Activated B cell treated with CpG ODN at 0.5 μM for 24 hours (primary cell): ENCODE measurements at regions of chr14 and their contacts with region 1.

Region 1: GRCh38 chr14:23301288-23301968 is 1.2 kb downstream of the PPP1R3E start:
- DNase-seq: peak; percentile 99
- ATAC-seq: peak; percentile 78
- H3K4me3 Mint-ChIP-seq: peak overlapping the region; percentile 99
- H3K27ac Mint-ChIP-seq: peak overlapping the region; percentile 90
- H3K4me1 Mint-ChIP-seq: peaks cover 37% of the 10 kb centered on the region
- H3K27me3 Mint-ChIP-seq: no peaks in the 10 kb centered on the region
- CTCF ChIP-seq: no peak

Region 2: GRCh38 chr14:21308479-21309237 is 1992.8 kb before region 1 on chr14:
- CTCF ChIA-PET with region 1: no interaction called
- POLR2A ChIA-PET with region 1: no interaction called
- intact Hi-C with region 1: loop called (anchors 5 kb)
- DNase-seq: peak; percentile 51
- ATAC-seq: peak; percentile 85
- H3K4me3 Mint-ChIP-seq: peak overlapping the region; percentile 87
- H3K27ac Mint-ChIP-seq: peak overlapping the region; percentile 93
- H3K4me1 Mint-ChIP-seq: peaks cover 26% of the 10 kb centered on the region
- H3K27me3 Mint-ChIP-seq: no peaks in the 10 kb centered on the region
- CTCF ChIP-seq: no peak

Region 3: DNA sequence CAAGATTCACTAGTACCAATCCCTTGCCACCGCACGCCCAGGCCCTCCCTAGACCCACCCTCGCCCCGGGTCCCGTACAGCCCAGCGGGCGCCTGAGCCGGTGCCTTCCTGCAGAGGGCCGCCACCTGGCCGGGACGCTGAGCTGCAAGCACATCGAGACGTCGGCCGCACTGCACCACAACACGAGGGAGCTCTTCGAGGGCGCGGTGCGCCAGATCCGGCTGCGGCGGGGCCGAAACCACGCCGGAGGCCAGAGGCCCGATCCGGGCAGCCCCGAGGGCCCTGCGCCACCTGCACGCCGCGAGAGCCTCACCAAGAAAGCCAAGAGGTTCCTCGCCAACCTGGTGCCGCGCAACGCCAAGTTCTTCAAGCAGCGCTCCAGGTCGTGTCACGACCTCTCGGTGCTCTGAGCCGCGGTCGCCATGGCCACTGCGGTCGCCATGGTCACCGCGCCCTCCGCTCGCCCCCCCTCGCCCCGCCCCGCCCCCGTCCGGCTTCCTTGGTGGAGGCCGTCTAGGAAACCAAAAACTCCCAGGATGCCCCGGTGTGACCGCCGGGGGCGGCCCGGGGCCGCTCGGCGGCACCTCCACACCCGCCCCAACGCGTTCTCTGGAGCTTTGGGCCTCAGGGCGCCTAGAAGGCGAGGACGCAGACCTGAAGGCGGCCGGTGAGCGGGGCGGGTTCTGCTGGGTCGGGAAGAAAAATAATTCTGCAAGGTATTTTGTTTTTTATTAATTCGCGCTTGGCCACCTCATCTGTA is 414.7 kb before region 1 on chr14:
- CTCF ChIA-PET with region 1: no interaction called
- POLR2A ChIA-PET with region 1: no interaction called
- intact Hi-C with region 1: loop called (anchors 5 kb)
- DNase-seq: peak; percentile 71
- ATAC-seq: peak; percentile 55
- H3K4me3 Mint-ChIP-seq: peak overlapping the region; percentile 90
- H3K27ac Mint-ChIP-seq: peak overlapping the region; percentile 97
- H3K4me1 Mint-ChIP-seq: peaks cover 80% of the 10 kb centered on the region
- H3K27me3 Mint-ChIP-seq: no peaks in the 10 kb centered on the region
- CTCF ChIP-seq: no peak

Region 4: GRCh38 chr14:23068476-23069412 is 232.7 kb before region 1 on chr14:
- CTCF ChIA-PET with region 1: interaction called, 3 read pairs
- POLR2A ChIA-PET with region 1: interaction called, 11 read pairs
- intact Hi-C with region 1: loop called (anchors 5 kb)
- DNase-seq: no peak
- ATAC-seq: peak; percentile 85
- H3K4me3 Mint-ChIP-seq: peak overlapping the region; percentile 22
- H3K27ac Mint-ChIP-seq: peak overlapping the region; percentile 50
- H3K4me1 Mint-ChIP-seq: peaks cover 36% of the 10 kb centered on the region
- H3K27me3 Mint-ChIP-seq: no peaks in the 10 kb centered on the region
- CTCF ChIP-seq: peak; percentile 79

Region 5: GRCh38 chr14:23269193-23269592 is 32.2 kb before region 1 on chr14:
- CTCF ChIA-PET with region 1: interaction called, 3 read pairs
- POLR2A ChIA-PET with region 1: interaction called, 9 read pairs
- intact Hi-C with region 1: loop called (anchors 1 kb)
- DNase-seq: no peak
- ATAC-seq: no peak
- H3K4me3 Mint-ChIP-seq: no peak overlapping the region
- H3K27ac Mint-ChIP-seq: no peak overlapping the region
- H3K4me1 Mint-ChIP-seq: no peaks in the 10 kb centered on the region
- H3K27me3 Mint-ChIP-seq: peaks cover 13% of the 10 kb centered on the region
- CTCF ChIP-seq: no peak

Region 6: DNA sequence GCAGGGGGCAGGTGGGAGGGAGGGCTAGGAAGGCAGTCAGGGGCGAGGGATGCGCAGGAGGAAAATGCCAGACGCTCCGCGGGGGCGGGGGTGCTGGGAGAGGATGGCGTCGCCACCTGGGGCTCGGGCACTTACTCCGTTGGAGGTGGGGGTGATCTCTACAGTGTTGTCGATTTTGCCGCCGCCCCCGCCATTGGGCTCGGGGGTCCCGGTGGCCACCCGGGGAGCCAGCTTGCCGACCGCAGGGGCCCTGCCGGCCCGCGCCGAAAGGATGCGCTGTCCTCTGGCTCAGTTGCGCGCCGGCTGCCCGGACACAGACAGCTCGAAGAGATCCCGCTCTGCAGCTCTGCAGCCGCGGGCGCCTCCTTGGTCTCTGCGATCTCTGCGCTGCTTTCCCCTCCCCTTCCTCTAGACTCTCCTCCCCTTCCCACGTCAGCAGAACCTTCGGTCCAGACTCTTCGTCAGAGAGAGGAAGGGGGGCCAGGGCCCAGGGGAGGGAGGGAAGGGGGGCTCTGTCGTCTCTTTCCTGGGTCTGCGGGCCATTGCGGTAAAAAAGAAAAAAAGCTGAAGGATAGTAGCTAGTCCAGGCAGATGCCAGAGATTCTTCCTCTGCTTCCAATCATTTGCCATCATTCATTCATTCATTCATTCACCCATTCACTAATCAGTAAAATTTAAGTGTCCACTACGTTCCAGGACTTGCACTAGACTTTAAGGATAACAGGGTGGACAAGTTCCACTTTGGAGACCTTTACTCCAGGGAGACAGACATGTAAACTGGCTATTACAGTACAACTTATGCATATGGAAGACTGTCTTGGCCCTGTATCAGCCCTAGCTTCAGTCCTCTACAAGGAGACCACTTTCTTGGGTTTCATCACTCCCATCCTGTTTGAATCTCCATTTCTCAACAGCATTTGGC is 51.3 kb after region 1 on chr14 and contains the start of gene SLC22A17:
- CTCF ChIA-PET with region 1: no interaction called
- POLR2A ChIA-PET with region 1: interaction called, 5 read pairs
- intact Hi-C with region 1: loop called (anchors 1 kb)
- DNase-seq: no peak
- ATAC-seq: peak; percentile 68
- H3K4me3 Mint-ChIP-seq: peak within 1 kb of the TSS; percentile 66
- H3K27ac Mint-ChIP-seq: no peak within 1 kb of the TSS
- H3K4me1 Mint-ChIP-seq: peaks cover 9% of the 10 kb centered on the region
- H3K27me3 Mint-ChIP-seq: peaks cover 58% of the 10 kb centered on the region
- CTCF ChIP-seq: no peak
- total RNA-seq, gene SLC22A17: 0.20 TPM in 1 of 2 replicates, not detected in the other

Region 7: DNA sequence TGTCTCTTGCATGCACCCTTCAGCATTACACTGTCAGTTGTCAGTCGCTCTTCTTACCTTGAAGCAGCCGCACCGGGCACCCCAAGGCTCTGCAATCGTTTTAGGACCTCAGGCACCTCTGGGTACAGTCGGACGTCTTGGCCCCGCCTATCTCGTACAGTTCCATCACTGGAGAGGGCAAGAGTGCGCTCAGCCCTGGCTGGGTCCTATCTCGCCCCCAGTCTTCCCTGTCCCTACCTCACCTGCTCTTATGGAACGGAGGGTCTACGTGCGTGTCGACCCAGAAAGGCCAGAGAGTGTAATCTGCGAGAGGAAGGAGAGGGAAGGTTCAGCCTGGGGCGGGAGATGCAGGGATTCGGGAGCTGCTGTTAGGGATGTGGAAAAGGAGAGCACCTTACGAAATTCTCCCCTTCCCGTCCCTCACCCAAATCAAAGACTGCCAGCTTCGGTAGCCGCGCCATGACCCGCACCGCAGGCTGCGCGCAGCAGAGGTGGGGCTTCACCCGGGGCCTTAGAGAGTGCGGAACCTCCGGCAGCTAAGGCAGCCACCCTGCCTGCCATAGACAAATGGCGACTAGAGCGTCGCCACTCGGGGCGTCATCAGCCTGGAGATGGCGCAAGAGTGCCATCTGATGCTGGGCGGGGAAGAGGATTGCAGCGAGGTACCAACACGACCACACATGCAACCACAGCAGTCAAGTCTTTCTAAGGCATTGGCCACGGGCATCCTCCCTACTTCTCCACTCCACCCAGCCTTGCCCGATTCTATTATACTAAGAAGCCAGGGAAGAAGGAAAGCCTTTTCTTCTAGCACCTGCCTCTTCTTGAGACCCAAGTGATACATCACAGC is 914.3 kb after region 1 on chr14 and contains the start of gene MDP1:
- CTCF ChIA-PET with region 1: no interaction called
- POLR2A ChIA-PET with region 1: no interaction called
- intact Hi-C with region 1: loop called (anchors 5 kb)
- DNase-seq: peak; percentile 71
- ATAC-seq: peak; percentile 75
- H3K4me3 Mint-ChIP-seq: peak within 1 kb of the TSS; percentile 93
- H3K27ac Mint-ChIP-seq: peak within 1 kb of the TSS; percentile 95
- H3K4me1 Mint-ChIP-seq: peaks cover 50% of the 10 kb centered on the region
- H3K27me3 Mint-ChIP-seq: no peaks in the 10 kb centered on the region
- CTCF ChIP-seq: no peak
- total RNA-seq, gene MDP1: 12.7 and 16.3 TPM in 2 replicates